AG04449 (cell line): ENCODE measurements at regions of chr9 and their contacts with region 1.

Region 1: GRCh38 chr9:77977210-77977611 is 54.4 kb downstream of the GNAQ start:
- DNase-seq: no peak
- H3K4me3 ChIP-seq: no peak overlapping the region
- CTCF ChIP-seq: peak; percentile 51

Region 2: GRCh38 chr9:77673941-77674791 is 303.0 kb before region 1 on chr9:
- CTCF ChIA-PET with region 1: no interaction called
- POLR2A ChIA-PET with region 1: no interaction called
- DNase-seq: peak; percentile 16
- H3K4me3 ChIP-seq: no peak overlapping the region
- CTCF ChIP-seq: no peak

Region 3: DNA sequence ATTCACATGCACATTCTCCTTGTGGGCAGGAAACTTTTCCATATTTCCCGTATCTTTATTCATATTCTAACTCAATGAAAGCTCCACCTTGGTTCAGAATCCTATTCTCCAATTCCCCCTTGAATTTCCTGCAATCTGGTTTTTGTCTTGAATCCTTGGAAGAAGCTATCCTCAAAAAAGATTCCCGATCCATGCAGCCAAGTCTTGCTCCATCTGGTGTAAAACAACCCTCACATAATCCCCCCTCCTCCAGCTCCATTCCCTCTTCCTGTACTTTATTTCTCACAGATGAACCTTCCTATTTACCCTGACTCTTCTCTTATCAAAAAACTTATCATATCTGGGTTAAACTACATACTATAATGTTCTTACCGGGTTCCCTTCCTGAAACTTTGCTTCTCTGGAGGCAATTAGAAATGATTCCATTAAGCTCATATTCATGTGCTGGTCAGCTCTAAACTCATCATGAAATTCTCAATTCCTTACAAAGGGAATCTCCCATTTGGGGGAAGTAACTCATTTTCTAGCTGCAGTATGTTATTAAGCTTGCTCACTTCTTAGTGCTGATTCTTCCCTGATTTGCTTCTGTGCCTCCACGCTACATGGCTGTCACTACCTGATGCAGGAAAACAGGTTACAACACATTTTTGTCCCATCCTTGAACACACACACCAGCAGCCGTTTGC is 27.3 kb before region 1 on chr9:
- CTCF ChIA-PET with region 1: interaction called, 22 read pairs
- POLR2A ChIA-PET with region 1: interaction called, 4 read pairs
- DNase-seq: no peak
- H3K4me3 ChIP-seq: no peak overlapping the region
- CTCF ChIP-seq: no peak

Region 4: DNA sequence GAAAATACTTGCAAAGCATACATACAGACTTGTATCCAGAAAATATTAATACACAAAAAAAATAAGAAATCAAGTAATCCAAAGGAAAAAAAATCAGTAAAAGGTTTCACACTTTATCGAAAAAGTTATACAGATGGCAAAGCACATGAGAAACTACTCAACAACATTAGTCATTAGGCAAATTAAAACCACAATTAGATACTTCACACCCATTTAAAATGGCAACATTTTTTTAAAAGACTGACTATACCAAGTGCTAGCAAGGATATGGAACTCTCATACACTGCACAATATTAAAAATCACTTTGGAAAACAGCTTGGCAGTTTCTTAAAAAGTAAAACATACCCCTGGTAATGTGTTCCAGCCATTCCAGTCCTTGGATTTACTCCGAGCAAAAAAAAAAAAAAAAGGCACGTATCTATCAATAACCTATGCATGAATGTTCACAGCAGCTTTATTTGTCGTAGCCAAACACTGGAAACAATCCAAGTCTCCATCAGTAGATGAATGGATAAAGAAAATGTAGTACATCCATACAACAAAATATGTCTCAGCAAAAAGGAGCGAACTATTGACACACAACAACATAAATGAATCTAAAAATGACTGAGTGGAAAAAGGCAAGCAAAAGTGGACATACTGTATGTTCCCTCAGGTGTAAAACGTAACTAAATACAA is 11.6 kb before region 1 on chr9:
- CTCF ChIA-PET with region 1: interaction called, 14 read pairs
- POLR2A ChIA-PET with region 1: interaction called, 3 read pairs
- DNase-seq: no peak
- H3K4me3 ChIP-seq: no peak overlapping the region
- CTCF ChIP-seq: no peak

Region 5: DNA sequence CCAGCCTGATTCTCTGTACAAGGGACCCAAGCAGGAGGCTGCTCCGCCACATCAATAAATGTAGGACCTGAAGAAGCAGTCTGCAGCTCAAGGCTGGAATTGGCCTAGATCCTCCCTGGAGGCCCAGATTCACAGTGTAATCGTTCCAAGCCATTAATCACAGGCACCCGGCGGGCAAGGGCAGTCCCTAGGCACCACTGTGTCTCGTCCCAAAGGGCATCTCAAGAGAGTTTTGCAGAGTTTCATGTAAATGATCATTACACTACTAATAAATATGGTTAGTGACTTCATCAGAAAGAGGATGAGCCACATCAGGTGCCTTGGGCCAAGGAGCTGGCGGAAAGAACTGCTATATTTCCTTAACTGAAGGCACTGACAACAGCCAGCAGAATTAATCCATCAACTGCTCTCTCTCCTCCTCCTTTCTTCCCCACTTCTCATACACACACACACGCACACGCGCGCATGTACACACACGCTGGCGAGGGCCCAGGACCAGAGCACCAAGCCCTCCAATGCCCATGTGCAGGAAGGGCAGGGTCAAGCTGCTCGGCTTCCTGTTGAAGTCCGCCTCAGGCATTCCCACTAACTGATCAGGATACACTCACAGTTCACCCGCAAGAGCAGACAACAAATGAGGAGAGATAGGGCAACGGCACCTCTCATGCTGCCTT is 20.5 kb after region 1 on chr9:
- CTCF ChIA-PET with region 1: interaction called, 25 read pairs
- POLR2A ChIA-PET with region 1: no interaction called
- DNase-seq: no peak
- H3K4me3 ChIP-seq: no peak overlapping the region
- CTCF ChIP-seq: no peak

Region 6: DNA sequence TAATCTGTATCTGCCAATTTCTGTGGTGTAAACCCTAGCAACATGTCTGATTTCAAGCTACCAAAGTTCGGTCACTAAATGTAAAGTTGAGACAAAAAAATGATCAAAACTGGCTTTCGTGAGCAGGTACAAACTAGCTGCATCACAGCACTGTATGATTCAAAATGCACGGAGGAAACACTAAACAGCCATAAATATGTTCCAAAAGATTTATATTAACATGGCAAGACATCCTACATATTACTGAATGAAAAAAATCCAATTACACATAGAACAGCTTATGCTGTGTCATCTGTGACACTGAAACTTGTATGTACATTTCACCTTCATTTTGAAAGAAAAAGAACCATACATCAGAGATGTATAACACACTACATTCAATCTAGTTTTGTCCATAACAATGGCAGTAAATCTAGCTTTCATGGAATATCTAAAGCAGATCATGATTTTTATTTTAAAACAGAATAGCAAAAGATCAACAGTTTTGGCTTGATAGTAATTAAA is 40.0 kb after region 1 on chr9:
- CTCF ChIA-PET with region 1: interaction called, 16 read pairs
- POLR2A ChIA-PET with region 1: no interaction called
- DNase-seq: no peak
- H3K4me3 ChIP-seq: no peak overlapping the region
- CTCF ChIP-seq: no peak

Region 7: GRCh38 chr9:78023003-78023741 is 46.0 kb after region 1 on chr9:
- CTCF ChIA-PET with region 1: interaction called, 16 read pairs
- POLR2A ChIA-PET with region 1: no interaction called
- DNase-seq: peak; percentile 42
- H3K4me3 ChIP-seq: no peak overlapping the region
- CTCF ChIP-seq: no peak

Region 8: DNA sequence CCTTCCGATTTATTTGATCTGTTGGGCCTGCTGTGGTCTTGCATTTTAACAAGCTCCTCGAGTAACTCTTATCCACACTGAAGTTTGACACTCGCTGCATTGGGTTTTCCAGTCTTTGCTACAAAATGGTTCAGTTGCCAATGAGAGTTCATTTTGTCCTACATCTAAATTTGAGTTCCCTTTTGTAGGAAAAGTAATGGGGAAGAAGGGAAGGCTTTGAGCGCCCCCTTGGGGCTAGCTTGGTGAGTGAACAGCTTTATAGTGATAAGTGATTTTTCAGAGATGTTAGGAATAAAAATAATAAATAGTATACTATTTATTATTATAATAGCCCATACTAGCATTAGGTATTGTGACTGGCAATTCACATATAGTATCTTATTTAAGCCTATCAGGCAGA is 144.3 kb after region 1 on chr9:
- CTCF ChIA-PET with region 1: interaction called, 31 read pairs
- POLR2A ChIA-PET with region 1: no interaction called
- DNase-seq: no peak
- H3K4me3 ChIP-seq: no peak overlapping the region
- CTCF ChIP-seq: peak; percentile 52